Adrenal gland (tissue), 19 donors: ENCODE measurements at regions of chr15 and their contacts with region 1.

Region 1: DNA sequence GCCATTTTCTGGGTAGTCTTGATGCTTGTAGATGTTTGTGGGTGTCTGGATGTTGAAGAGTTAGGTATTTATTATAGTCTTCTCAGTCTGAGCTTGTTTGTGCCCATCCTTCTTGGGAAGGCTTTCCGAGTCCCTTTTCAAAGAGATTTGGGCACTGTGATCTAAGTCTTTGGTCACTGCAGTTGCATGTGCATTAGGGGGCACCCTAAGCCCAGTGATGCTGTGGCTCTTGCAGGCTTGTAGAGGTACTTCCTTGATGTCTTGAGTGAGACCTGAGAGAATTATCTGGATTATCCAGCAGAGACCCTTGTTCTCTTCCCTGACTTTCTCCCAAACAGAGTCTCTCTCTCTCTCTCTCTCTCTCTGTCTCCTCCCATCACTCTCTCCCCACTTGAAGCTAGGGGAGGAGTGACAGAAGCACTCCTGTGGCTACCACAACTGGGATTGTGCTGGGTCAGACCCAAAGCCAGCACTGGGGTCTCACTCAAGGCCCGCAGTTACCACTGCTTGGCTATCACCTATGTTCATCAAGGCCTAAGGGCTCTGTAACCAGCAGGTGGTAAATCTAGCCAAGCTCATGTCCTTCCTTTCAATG is 68.5 kb downstream of the TMCO5A start:
- DNase-seq: peak; percentile 47 to 77 (median 67)
- H3K4me3 ChIP-seq: no peak overlapping the region
- H3K27ac ChIP-seq: no peak overlapping the region
- H3K4me1 ChIP-seq: peaks cover 4 to 10% of the 10 kb centered on the region in 2 donors
- H3K27me3 ChIP-seq: no peaks in the 10 kb centered on the region
- CTCF ChIP-seq: peak; percentile 22 to 74 (median 64)
- POLR2A ChIP-seq: no peak

Region 2: GRCh38 chr15:38354315-38354929 is 351.4 kb after region 1 on chr15:
- intact Hi-C with region 1: loop called in 1 of 2 experiments (anchors 5 kb)
- DNase-seq: peak; percentile 61 to 89 (median 68)
- H3K4me3 ChIP-seq: no peak overlapping the region
- H3K27ac ChIP-seq: no peak overlapping the region
- H3K4me1 ChIP-seq: peaks cover 0 to 5% of the 10 kb centered on the region in 2 donors
- H3K27me3 ChIP-seq: no peaks in the 10 kb centered on the region
- CTCF ChIP-seq: peak; percentile 66 to 89 (median 83)
- POLR2A ChIP-seq: no peak

Region 3: GRCh38 chr15:38389924-38390542 is 387.1 kb after region 1 on chr15:
- intact Hi-C with region 1: loop called (anchors 10 kb)
- DNase-seq: peak; percentile 52 to 84 (median 66)
- H3K4me3 ChIP-seq: no peak overlapping the region
- H3K27ac ChIP-seq: no peak overlapping the region
- H3K4me1 ChIP-seq: no peaks in the 10 kb centered on the region
- H3K27me3 ChIP-seq: no peaks in the 10 kb centered on the region
- CTCF ChIP-seq: peak; percentile 65 to 84 (median 72)
- POLR2A ChIP-seq: no peak